ENCODE measurements at regions of chr15 and their contacts with region 1.

Region 1: DNA sequence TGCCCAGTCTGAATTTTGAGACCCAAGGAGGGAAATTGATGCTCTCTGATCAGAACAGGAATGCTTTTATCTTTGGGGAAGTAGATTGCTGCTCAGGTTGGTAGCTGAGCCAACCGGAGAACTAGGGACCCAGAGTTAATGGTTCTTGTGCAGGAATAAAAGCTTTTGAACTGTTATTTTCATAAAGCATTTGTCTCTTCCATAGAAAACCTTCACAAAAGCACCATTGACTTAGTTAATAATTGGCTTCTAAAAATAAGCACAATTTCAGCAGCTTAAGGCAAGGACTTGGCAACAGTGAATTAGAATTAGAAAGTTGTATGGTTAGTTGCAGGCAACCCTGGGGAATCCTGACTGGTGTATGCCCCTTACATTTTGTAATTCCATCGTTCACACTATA is 53.8 kb downstream of the MAP2K1 start:
- DNase-seq: no peak
- ATAC-seq: no peak
- H3K4me3 ChIP-seq: no peak overlapping the region
- H3K27ac ChIP-seq: no peak overlapping the region
- H3K4me1 ChIP-seq: no peaks in the 10 kb centered on the region
- H3K27me3 ChIP-seq: no peaks in the 10 kb centered on the region
- CTCF ChIP-seq: no peak

Region 2: GRCh38 chr15:65666257-65666656 is 774.2 kb before region 1 on chr15:
- CTCF ChIA-PET with region 1: no interaction called
- POLR2A ChIA-PET with region 1: no interaction called
- in situ Hi-C with region 1: no loop called
- intact Hi-C with region 1: no loop called
- DNase-seq: no peak
- ATAC-seq: no peak
- H3K4me3 ChIP-seq: no peak overlapping the region
- H3K27ac ChIP-seq: no peak overlapping the region
- H3K4me1 ChIP-seq: no peaks in the 10 kb centered on the region
- H3K27me3 ChIP-seq: no peaks in the 10 kb centered on the region
- CTCF ChIP-seq: no peak

Region 3: GRCh38 chr15:66231394-66232266 is 208.9 kb before region 1 on chr15:
- CTCF ChIA-PET with region 1: no interaction called
- POLR2A ChIA-PET with region 1: interaction called, 12 read pairs
- in situ Hi-C with region 1: no loop called
- intact Hi-C with region 1: no loop called
- DNase-seq: no peak
- ATAC-seq: no peak
- H3K4me3 ChIP-seq: no peak overlapping the region
- H3K27ac ChIP-seq: no peak overlapping the region
- H3K4me1 ChIP-seq: no peaks in the 10 kb centered on the region
- H3K27me3 ChIP-seq: no peaks in the 10 kb centered on the region
- CTCF ChIP-seq: no peak

Region 4: GRCh38 chr15:66429117-66429516 is 11.4 kb before region 1 on chr15:
- CTCF ChIA-PET with region 1: no interaction called
- POLR2A ChIA-PET with region 1: interaction called, 11 read pairs
- in situ Hi-C with region 1: no loop called
- intact Hi-C with region 1: no loop called
- DNase-seq: no peak
- ATAC-seq: peak; percentile 48; the same call in 1 of the 2 replicates
- H3K4me3 ChIP-seq: no peak overlapping the region
- H3K27ac ChIP-seq: no peak overlapping the region
- H3K4me1 ChIP-seq: no peaks in the 10 kb centered on the region
- H3K27me3 ChIP-seq: no peaks in the 10 kb centered on the region
- CTCF ChIP-seq: no peak

Region 5: DNA sequence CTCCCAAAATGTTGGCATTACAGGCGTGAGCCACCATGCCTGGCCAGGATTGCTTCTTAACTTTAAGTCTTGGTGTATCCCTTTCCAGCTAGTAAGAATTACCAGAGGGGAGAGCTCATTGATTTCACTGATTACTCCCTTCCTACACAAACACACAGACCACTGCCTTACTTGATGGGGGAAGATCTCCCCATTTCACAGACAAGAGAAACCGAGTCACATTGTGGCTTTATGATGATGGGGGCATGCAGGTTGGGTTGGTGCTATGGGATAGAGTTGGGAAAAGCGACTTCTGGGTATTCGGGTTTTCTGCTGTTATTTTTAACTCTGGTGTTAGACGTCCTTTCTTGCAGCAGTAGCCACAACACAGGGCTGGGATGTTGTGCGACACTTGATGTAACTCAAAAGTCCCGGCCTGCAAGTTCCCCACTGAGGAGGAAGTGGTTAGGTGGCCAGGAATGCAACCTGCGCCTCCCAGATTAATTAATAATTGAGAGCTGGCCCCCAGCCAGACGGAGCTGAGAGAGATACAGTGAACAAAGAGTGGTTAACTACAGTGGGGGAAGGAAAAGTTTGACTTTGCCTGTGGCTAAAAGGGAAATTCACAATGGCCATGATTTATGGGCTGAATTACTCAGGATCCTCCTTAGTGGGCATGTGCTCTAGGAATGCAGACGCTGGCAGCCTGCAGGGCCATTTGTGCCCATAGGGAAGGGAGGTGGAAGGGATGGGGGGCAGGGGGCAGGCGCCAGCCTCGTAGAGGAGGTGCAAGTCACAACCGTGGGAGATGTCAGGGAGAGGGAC is 325.2 kb after region 1 on chr15:
- CTCF ChIA-PET with region 1: no interaction called
- POLR2A ChIA-PET with region 1: no interaction called
- in situ Hi-C with region 1: no loop called
- intact Hi-C with region 1: no loop called
- DNase-seq: no peak
- ATAC-seq: peak; percentile 62
- H3K4me3 ChIP-seq: no peak overlapping the region
- H3K27ac ChIP-seq: peak overlapping the region; percentile 90
- H3K4me1 ChIP-seq: peaks cover 96% of the 10 kb centered on the region
- H3K27me3 ChIP-seq: no peaks in the 10 kb centered on the region
- CTCF ChIP-seq: no peak